Ovary (tissue), 10 donors: ENCODE measurements at regions of chr3 and their contacts with region 1.

Region 1: DNA sequence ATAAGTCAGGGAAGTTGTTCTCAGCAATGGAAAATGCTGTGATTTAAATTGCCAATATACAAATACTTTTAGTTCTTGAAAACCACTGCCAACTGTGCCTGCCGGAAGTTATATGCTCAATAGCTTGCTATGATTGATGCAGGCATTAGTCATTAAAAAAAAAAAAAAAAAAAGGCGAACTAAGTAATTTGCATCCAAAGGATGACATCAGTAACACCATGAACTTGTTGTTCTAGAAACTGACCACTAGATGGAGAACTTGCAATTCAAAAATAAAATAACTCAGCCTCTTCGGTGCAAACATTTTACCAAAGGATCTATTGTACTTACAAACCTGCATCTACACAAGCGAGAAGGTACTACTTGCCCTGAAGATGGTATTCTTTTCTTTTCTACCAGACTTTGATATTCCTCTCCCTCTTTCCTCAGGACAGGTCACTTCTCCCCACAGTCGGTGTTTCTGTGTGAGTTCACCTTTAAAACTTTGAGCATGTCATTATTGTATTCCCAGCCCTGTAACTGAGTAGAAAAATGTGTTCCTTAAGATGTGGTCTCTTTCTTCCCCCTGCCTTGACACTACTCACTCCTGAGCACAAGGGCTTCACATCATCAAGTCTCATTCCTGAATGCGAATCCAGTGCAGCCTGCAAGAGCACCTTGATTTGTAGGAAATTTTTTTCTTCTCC is 115.0 kb upstream of the VEPH1 start:
- DNase-seq: no peak
- H3K4me3 ChIP-seq: no peak overlapping the region
- H3K27ac ChIP-seq: no peak overlapping the region
- H3K4me1 ChIP-seq: no peaks in the 10 kb centered on the region
- H3K27me3 ChIP-seq: no peaks in the 10 kb centered on the region
- CTCF ChIP-seq: peak; percentile 30 to 42 (median 33)
- EP300 ChIP-seq: no peak
- POLR2A ChIP-seq: no peak

Region 2: GRCh38 chr3:157572559-157573270 is 45.5 kb before region 1 on chr3:
- intact Hi-C with region 1: no loop called
- DNase-seq: no peak
- H3K4me3 ChIP-seq: no peak overlapping the region
- H3K27ac ChIP-seq: no peak overlapping the region
- H3K4me1 ChIP-seq: no peaks in the 10 kb centered on the region
- H3K27me3 ChIP-seq: no peaks in the 10 kb centered on the region
- CTCF ChIP-seq: no peak
- EP300 ChIP-seq: no peak
- POLR2A ChIP-seq: no peak

Region 3: GRCh38 chr3:158434412-158435038 is 816.3 kb after region 1 on chr3:
- intact Hi-C with region 1: loop called (anchors 5 to 10 kb)
- DNase-seq: peak; percentile 14 to 53 (median 29)
- H3K4me3 ChIP-seq: no peak overlapping the region
- H3K27ac ChIP-seq: no peak overlapping the region
- H3K4me1 ChIP-seq: no peaks in the 10 kb centered on the region
- H3K27me3 ChIP-seq: peaks cover 4% of the 10 kb centered on the region
- CTCF ChIP-seq: peak in 1 of 3 donors; percentile 44
- EP300 ChIP-seq: no peak
- POLR2A ChIP-seq: no peak